ENCODE measurements at regions of chr20 and their contacts with region 1.

Region 1: GRCh38 chr20:49140834-49141233 is 47.3 kb downstream of the STAU1 start:
- DNase-seq: no peak
- ATAC-seq: peak; percentile 20
- H3K4me3 ChIP-seq: no peak overlapping the region
- H3K27ac ChIP-seq: no peak overlapping the region
- H3K4me1 ChIP-seq: no peaks in the 10 kb centered on the region
- H3K27me3 ChIP-seq: no peaks in the 10 kb centered on the region
- CTCF ChIP-seq: no peak

Region 2: GRCh38 chr20:49179368-49180277 is 38.8 kb after region 1 on chr20:
- CTCF ChIA-PET with region 1: no interaction called
- POLR2A ChIA-PET with region 1: no interaction called
- intact Hi-C with region 1: loop called (anchors 2 kb)
- DNase-seq: peak; percentile 89
- ATAC-seq: peak; percentile 89
- H3K4me3 ChIP-seq: peak overlapping the region; percentile 31
- H3K27ac ChIP-seq: peak overlapping the region; percentile 61
- H3K4me1 ChIP-seq: peaks cover 27% of the 10 kb centered on the region
- H3K27me3 ChIP-seq: no peaks in the 10 kb centered on the region
- CTCF ChIP-seq: no peak

Region 3: GRCh38 chr20:49372095-49372726 is 231.4 kb after region 1 on chr20:
- CTCF ChIA-PET with region 1: no interaction called
- POLR2A ChIA-PET with region 1: no interaction called
- intact Hi-C with region 1: no loop called
- DNase-seq: no peak
- ATAC-seq: no peak
- H3K4me3 ChIP-seq: no peak overlapping the region
- H3K27ac ChIP-seq: no peak overlapping the region
- H3K4me1 ChIP-seq: no peaks in the 10 kb centered on the region
- H3K27me3 ChIP-seq: peaks cover 66% of the 10 kb centered on the region
- CTCF ChIP-seq: no peak

Measured in PC-3 (cell line).